Activated CD8-positive, alpha-beta T cell treated with anti-CD3 and anti-CD28 coated beads for 36 hours (primary cell): ENCODE measurements at regions of chr19 and their contacts with region 1.

Region 1: GRCh38 chr19:11798391-11799330 is at the start of gene ZNF491:
- DNase-seq: peak; percentile 97
- ATAC-seq: peak; percentile 98
- H3K4me3 Mint-ChIP-seq: peak within 1 kb of the TSS; percentile 87
- H3K27ac Mint-ChIP-seq: peak within 1 kb of the TSS; percentile 69
- H3K4me1 Mint-ChIP-seq: peaks cover 14% of the 10 kb centered on the region
- H3K27me3 Mint-ChIP-seq: no peaks in the 10 kb centered on the region
- CTCF ChIP-seq: peak; percentile 48
- total RNA-seq, gene ZNF491: 0.76 to 1.4 TPM

Region 2: GRCh38 chr19:11535792-11536595 is 262.7 kb before region 1 on chr19:
- CTCF ChIA-PET with region 1: no interaction called
- POLR2A ChIA-PET with region 1: no interaction called
- intact Hi-C with region 1: no loop called
- DNase-seq: peak; percentile 93
- ATAC-seq: peak; percentile 81
- H3K4me3 Mint-ChIP-seq: peak overlapping the region; percentile 46
- H3K27ac Mint-ChIP-seq: peak overlapping the region; percentile 76
- H3K4me1 Mint-ChIP-seq: peaks cover 26% of the 10 kb centered on the region
- H3K27me3 Mint-ChIP-seq: peaks cover 19% of the 10 kb centered on the region
- CTCF ChIP-seq: peak; percentile 91

Region 3: GRCh38 chr19:11781295-11782052 is 17.2 kb before region 1 on chr19:
- CTCF ChIA-PET with region 1: interaction called, 10 read pairs
- POLR2A ChIA-PET with region 1: no interaction called
- intact Hi-C with region 1: no loop called
- DNase-seq: no peak
- ATAC-seq: no peak
- H3K4me3 Mint-ChIP-seq: no peak overlapping the region
- H3K27ac Mint-ChIP-seq: no peak overlapping the region
- H3K4me1 Mint-ChIP-seq: peaks cover 2% of the 10 kb centered on the region
- H3K27me3 Mint-ChIP-seq: no peaks in the 10 kb centered on the region
- CTCF ChIP-seq: no peak

Region 4: DNA sequence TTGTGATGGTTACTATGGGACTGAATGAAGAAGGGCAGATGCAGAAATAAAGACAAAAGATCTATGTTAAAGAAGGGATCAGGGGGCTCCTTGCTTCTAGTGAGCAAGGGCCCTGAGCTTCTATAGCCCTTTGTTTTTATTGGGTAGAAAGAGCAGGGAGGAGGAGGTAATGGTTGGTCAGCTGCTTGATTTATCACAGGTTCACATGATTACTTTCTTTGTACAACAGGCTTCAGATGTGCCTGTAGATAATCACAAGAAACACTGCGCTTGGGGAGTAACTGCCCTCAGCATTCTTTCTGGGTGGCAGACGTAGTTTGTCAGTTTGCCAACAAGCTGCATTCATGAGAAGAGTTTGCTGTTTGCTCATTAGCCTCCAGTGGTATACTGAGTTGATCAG is 45.1 kb after region 1 on chr19:
- CTCF ChIA-PET with region 1: interaction called, 19 read pairs
- POLR2A ChIA-PET with region 1: interaction called, 5 read pairs
- intact Hi-C with region 1: no loop called
- DNase-seq: no peak
- ATAC-seq: no peak
- H3K4me3 Mint-ChIP-seq: no peak overlapping the region
- H3K27ac Mint-ChIP-seq: peak overlapping the region; percentile 2
- H3K4me1 Mint-ChIP-seq: peaks cover 16% of the 10 kb centered on the region
- H3K27me3 Mint-ChIP-seq: no peaks in the 10 kb centered on the region
- CTCF ChIP-seq: no peak

Region 5: DNA sequence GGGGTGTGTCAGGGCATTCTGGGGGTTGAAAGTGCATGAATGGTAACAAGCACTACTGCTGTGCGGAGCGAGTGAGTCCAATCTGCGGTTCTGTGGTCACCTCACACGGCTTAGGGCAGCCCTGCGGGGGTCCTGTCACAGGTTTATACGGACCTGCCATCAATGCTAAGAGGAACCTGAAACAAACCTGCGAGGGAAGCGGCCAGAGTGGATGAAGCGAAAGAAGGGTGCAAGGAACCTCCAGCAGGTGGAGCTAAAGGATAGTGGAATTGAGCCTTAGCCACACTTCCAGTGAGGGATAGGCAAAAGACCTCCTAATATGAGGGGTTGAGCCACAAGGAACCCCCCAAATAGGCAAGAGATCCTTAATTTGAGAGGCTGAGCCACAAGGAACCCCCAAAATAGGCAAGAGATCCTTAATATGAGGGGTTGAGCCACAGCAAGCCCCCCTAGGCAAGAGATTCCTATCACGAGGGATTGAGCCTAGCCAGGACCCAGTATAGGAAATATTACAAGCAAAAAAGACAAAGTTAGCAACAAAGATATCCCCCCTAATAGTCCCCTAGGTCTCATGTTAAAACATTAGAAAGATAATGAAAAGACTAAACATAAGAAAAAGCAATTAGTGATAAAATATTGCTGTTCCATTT is 82.6 kb after region 1 on chr19:
- CTCF ChIA-PET with region 1: interaction called, 69 read pairs
- POLR2A ChIA-PET with region 1: no interaction called
- intact Hi-C with region 1: no loop called
- DNase-seq: peak; percentile 76
- ATAC-seq: peak; percentile 81
- H3K4me3 Mint-ChIP-seq: no peak overlapping the region
- H3K27ac Mint-ChIP-seq: no peak overlapping the region
- H3K4me1 Mint-ChIP-seq: peaks cover 2% of the 10 kb centered on the region
- H3K27me3 Mint-ChIP-seq: peaks cover 1% of the 10 kb centered on the region
- CTCF ChIP-seq: peak; percentile 68

Region 6: GRCh38 chr19:11964858-11965645 is 166.4 kb after region 1 on chr19 and contains the start of gene ZNF763:
- CTCF ChIA-PET with region 1: interaction called, 13 read pairs
- POLR2A ChIA-PET with region 1: no interaction called
- intact Hi-C with region 1: no loop called
- DNase-seq: peak; percentile 97
- ATAC-seq: peak; percentile 97
- H3K4me3 Mint-ChIP-seq: peak within 1 kb of the TSS; percentile 88
- H3K27ac Mint-ChIP-seq: peak within 1 kb of the TSS; percentile 92
- H3K4me1 Mint-ChIP-seq: peaks cover 24% of the 10 kb centered on the region
- H3K27me3 Mint-ChIP-seq: no peaks in the 10 kb centered on the region
- CTCF ChIP-seq: no peak
- total RNA-seq, gene ZNF763: 0.83 to 1.7 TPM

Region 7: DNA sequence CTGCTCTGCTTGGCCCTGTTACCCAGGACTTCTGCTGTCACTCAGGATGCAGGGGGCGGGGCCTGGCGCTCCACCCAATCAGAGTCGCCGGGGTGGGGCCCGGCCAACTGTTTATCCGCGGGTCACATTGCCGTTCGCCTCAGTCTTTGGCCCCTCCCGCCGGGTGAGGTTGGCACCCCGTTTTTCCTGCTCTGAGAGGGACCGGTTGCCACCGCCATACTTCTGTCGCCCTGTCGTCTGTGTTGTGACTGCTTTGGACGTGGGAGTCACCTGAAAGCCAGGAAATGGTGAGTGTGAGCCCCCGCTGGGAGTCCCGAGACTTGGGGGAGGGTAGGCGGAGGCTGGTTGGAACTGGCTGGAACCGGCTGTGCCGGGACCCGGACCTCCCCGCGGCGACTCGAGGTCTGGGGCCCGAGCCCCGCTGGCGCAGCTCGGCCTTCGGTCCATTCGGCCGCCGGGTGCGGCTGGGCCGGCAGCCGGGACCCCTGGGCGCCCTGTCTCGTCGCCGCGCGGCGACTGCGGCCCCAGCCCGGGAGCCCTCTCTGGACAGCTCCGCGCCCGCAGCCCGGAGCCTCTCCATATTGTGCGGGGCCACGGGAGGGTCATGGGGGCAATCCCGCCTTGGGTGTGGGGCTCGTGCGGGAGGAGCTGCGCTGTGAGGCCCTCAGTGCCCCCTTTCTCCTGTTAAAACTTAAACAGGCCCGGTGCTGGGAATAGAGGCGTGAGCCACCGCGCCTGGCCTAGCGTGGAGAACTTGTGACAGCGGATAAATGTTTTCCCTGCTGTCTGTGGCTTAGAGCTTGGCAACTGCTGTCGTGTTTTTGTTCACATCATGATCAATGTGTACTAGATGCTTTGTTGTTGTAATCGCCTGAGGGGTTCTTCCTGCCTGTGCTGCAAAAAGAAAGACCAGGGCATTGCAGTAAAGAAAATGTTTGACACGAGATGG is 266.2 kb after region 1 on chr19 and contains the start of gene ZNF844:
- CTCF ChIA-PET with region 1: interaction called, 10 read pairs
- POLR2A ChIA-PET with region 1: no interaction called
- intact Hi-C with region 1: no loop called
- DNase-seq: peak; percentile 89
- ATAC-seq: peak; percentile 93
- H3K4me3 Mint-ChIP-seq: peak within 1 kb of the TSS; percentile 82
- H3K27ac Mint-ChIP-seq: peak within 1 kb of the TSS; percentile 89
- H3K4me1 Mint-ChIP-seq: peaks cover 9% of the 10 kb centered on the region
- H3K27me3 Mint-ChIP-seq: no peaks in the 10 kb centered on the region
- CTCF ChIP-seq: no peak
- total RNA-seq, gene ZNF844: 2.6 to 3.8 TPM